ENCODE measurements at regions of chr1 and their contacts with region 1.

Region 1: GRCh38 chr1:161117759-161118581 is at the starts of genes NIT1 and PFDN2:
- DNase-seq: peak; percentile 85
- H3K4me3 Mint-ChIP-seq: peak within 1 kb of the TSS; percentile 97
- H3K27ac Mint-ChIP-seq: peak within 1 kb of the TSS; percentile 95
- H3K4me1 Mint-ChIP-seq: peaks cover 50% of the 10 kb centered on the region
- H3K27me3 Mint-ChIP-seq: no peaks in the 10 kb centered on the region
- CTCF ChIP-seq: no peak
- total RNA-seq, gene NIT1: 73.4 and 75.4 TPM in 2 replicates
- total RNA-seq, gene PFDN2: 514 and 683 TPM in 2 replicates

Region 2: GRCh38 chr1:161013488-161014230 is 104.3 kb before region 1 on chr1:
- CTCF ChIA-PET with region 1: interaction called, 3 read pairs
- POLR2A ChIA-PET with region 1: interaction called, 112 read pairs
- intact Hi-C with region 1: no loop called
- DNase-seq: peak; percentile 96
- H3K4me3 Mint-ChIP-seq: peak overlapping the region; percentile 70
- H3K27ac Mint-ChIP-seq: peak overlapping the region; percentile 93
- H3K4me1 Mint-ChIP-seq: peaks cover 44% of the 10 kb centered on the region
- H3K27me3 Mint-ChIP-seq: no peaks in the 10 kb centered on the region
- CTCF ChIP-seq: no peak

Region 3: DNA sequence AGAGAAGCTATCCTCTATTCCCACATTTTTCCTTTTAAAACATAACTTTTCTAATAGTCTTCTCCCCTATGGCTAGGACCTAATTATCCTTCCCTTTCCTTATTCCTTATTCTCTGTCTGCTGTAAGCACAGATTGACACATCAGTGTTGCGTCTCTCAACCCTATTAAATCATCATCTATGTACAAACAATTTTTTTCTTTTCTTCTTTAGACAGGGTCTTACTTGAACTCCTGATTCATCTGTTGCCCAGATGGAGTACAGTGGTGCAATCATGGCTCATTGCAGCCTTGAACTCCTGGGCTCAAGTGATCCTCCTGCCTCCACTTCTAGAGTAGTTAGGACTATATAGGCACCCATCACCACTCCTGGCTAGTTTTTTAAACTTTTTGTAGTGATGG is 11.5 kb before region 1 on chr1:
- CTCF ChIA-PET with region 1: interaction called, 4 read pairs
- POLR2A ChIA-PET with region 1: interaction called, 36 read pairs
- intact Hi-C with region 1: no loop called
- DNase-seq: no peak
- H3K4me3 Mint-ChIP-seq: no peak overlapping the region
- H3K27ac Mint-ChIP-seq: peak overlapping the region; percentile 9
- H3K4me1 Mint-ChIP-seq: peaks cover 20% of the 10 kb centered on the region
- H3K27me3 Mint-ChIP-seq: no peaks in the 10 kb centered on the region
- CTCF ChIP-seq: no peak

Region 4: GRCh38 chr1:161139765-161140164 is 21.8 kb after region 1 on chr1:
- CTCF ChIA-PET with region 1: interaction called, 11 read pairs
- POLR2A ChIA-PET with region 1: interaction called, 12 read pairs
- intact Hi-C with region 1: no loop called
- DNase-seq: peak; percentile 77
- H3K4me3 Mint-ChIP-seq: no peak overlapping the region
- H3K27ac Mint-ChIP-seq: no peak overlapping the region
- H3K4me1 Mint-ChIP-seq: peaks cover 4% of the 10 kb centered on the region
- H3K27me3 Mint-ChIP-seq: no peaks in the 10 kb centered on the region
- CTCF ChIP-seq: peak; percentile 64

Region 5: GRCh38 chr1:161159087-161159912 is 41.3 kb after region 1 on chr1 and contains the start of gene USP21:
- CTCF ChIA-PET with region 1: interaction called, 3 read pairs
- POLR2A ChIA-PET with region 1: interaction called, 77 read pairs
- intact Hi-C with region 1: no loop called
- DNase-seq: peak; percentile 94
- H3K4me3 Mint-ChIP-seq: peak within 1 kb of the TSS; percentile 87
- H3K27ac Mint-ChIP-seq: peak within 1 kb of the TSS; percentile 94
- H3K4me1 Mint-ChIP-seq: peaks cover 45% of the 10 kb centered on the region
- H3K27me3 Mint-ChIP-seq: no peaks in the 10 kb centered on the region
- CTCF ChIP-seq: peak; percentile 55
- total RNA-seq, gene USP21: 33.8 and 36.6 TPM in 2 replicates

Measured in MCF 10A (cell line).